ENCODE measurements at regions of chr16 and their contacts with region 1.

Region 1: DNA sequence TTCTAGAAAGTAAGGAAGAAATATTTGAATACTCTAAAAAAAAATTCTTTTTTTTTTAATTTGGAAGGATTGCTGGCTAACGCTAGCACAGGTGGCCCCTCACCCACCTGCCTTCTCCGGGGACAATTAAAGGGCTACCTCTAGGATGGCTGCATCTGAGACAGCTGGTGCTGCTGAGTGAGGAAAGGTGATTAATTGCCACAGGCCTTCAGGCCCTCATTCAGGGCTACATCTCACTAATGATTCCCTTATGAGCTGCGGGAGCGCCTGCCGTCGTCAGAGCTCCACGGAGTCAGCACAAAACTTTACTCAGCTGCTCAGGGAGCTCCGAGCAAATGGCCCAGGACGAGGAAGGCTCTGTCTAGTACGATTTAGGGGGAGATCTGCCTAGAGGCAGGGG is 27.0 kb upstream of the AKTIP start:
- DNase-seq: no peak
- ATAC-seq: no peak
- H3K4me3 Mint-ChIP-seq: no peak overlapping the region
- H3K27ac Mint-ChIP-seq: no peak overlapping the region
- H3K4me1 Mint-ChIP-seq: peaks cover 13% of the 10 kb centered on the region
- H3K27me3 Mint-ChIP-seq: no peaks in the 10 kb centered on the region

Region 2: DNA sequence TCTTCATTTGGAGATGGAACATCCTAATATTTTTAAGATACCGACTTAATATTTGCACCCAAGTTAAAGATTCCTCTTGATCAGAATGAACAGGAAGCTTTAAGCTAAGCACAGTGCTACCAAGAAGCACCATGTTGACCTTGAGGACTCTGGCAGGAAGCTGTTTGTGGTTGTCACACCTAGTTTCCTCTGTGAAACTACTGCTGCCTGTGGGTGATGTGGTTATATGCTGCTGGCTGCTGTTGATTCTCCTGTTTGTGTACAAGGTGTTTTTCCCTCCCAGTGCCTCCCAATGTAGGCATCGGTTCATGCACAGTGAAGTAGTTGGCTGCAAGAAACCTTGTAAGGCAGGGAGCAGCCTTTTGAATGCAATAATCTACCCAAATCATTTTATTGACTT is 72.4 kb before region 1 on chr16:
- CTCF ChIA-PET with region 1: interaction called, 3 read pairs
- POLR2A ChIA-PET with region 1: interaction called, 15 read pairs
- intact Hi-C with region 1: no loop called
- DNase-seq: peak; percentile 78
- ATAC-seq: peak; percentile 89
- H3K4me3 Mint-ChIP-seq: peak overlapping the region; percentile 39
- H3K27ac Mint-ChIP-seq: peak overlapping the region; percentile 95
- H3K4me1 Mint-ChIP-seq: peaks cover 83% of the 10 kb centered on the region
- H3K27me3 Mint-ChIP-seq: no peaks in the 10 kb centered on the region

Region 3: GRCh38 chr16:53518550-53519416 is 11.3 kb before region 1 on chr16:
- CTCF ChIA-PET with region 1: interaction called, 5 read pairs
- POLR2A ChIA-PET with region 1: no interaction called
- intact Hi-C with region 1: loop called (anchors 1 to 2 kb)
- DNase-seq: peak; percentile 84
- ATAC-seq: peak; percentile 86
- H3K4me3 Mint-ChIP-seq: peak overlapping the region; percentile 58
- H3K27ac Mint-ChIP-seq: peak overlapping the region; percentile 85
- H3K4me1 Mint-ChIP-seq: peaks cover 46% of the 10 kb centered on the region
- H3K27me3 Mint-ChIP-seq: no peaks in the 10 kb centered on the region

Region 4: GRCh38 chr16:53664724-53665345 is 134.8 kb after region 1 on chr16:
- CTCF ChIA-PET with region 1: no interaction called
- POLR2A ChIA-PET with region 1: interaction called, 3 read pairs
- intact Hi-C with region 1: loop called in 1 of 2 experiments (anchors 2 kb)
- DNase-seq: peak; percentile 58
- ATAC-seq: peak; percentile 99
- H3K4me3 Mint-ChIP-seq: no peak overlapping the region
- H3K27ac Mint-ChIP-seq: no peak overlapping the region
- H3K4me1 Mint-ChIP-seq: peaks cover 16% of the 10 kb centered on the region
- H3K27me3 Mint-ChIP-seq: no peaks in the 10 kb centered on the region

Region 5: DNA sequence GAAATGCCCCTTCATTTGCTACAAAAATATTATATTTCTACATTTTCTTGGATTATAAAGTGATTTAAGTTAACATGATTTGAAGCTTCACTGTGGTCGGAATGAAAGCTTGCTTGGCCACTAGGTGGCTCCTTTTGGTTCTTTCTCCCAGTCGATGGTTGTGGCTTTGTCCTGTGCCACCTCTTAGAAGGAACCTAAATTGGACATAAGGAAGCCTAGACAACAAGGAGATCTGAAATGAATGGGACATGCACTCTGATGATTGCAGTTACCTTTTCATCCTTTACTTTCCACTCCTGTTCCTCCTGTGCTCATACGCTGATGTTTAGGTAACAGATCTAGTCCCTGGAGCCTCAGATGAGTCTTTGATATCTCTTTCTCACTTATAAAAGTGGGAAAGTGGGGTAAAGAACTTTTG is 213.1 kb after region 1 on chr16:
- CTCF ChIA-PET with region 1: interaction called, 3 read pairs
- POLR2A ChIA-PET with region 1: no interaction called
- intact Hi-C with region 1: loop called in 1 of 2 experiments (anchors 2 kb)
- DNase-seq: peak; percentile 48
- ATAC-seq: no peak
- H3K4me3 Mint-ChIP-seq: no peak overlapping the region
- H3K27ac Mint-ChIP-seq: no peak overlapping the region
- H3K4me1 Mint-ChIP-seq: peaks cover 25% of the 10 kb centered on the region
- H3K27me3 Mint-ChIP-seq: no peaks in the 10 kb centered on the region

Region 6: DNA sequence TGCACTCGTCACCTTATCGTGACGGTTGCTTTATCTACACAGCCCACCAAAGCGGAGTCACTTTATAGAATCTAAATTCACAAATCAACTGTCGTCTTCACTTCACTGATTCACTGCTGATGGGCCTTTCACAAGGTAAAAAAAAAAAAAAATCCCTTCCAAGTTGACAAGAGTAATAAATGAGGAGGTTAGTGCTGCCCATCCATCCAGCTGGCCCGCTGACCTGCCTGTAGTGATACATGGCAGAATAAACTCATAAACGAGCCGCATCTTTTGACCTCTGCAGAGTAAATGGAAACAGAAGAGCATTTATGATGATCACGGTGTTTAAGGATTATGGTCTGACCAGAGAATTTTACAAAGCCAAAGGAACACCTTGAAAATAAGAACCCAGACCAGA is 1173.3 kb after region 1 on chr16:
- CTCF ChIA-PET with region 1: no interaction called
- POLR2A ChIA-PET with region 1: no interaction called
- intact Hi-C with region 1: no loop called
- DNase-seq: no peak
- ATAC-seq: no peak
- H3K4me3 Mint-ChIP-seq: no peak overlapping the region
- H3K27ac Mint-ChIP-seq: no peak overlapping the region
- H3K4me1 Mint-ChIP-seq: no peaks in the 10 kb centered on the region
- H3K27me3 Mint-ChIP-seq: no peaks in the 10 kb centered on the region

Measured in activated CD4-positive, alpha-beta T cell treated with anti-CD3 and anti-CD28 coated beads for 36 hours (primary cell).